ENCODE measurements at regions of chr4 and their contacts with region 1.

Region 1: DNA sequence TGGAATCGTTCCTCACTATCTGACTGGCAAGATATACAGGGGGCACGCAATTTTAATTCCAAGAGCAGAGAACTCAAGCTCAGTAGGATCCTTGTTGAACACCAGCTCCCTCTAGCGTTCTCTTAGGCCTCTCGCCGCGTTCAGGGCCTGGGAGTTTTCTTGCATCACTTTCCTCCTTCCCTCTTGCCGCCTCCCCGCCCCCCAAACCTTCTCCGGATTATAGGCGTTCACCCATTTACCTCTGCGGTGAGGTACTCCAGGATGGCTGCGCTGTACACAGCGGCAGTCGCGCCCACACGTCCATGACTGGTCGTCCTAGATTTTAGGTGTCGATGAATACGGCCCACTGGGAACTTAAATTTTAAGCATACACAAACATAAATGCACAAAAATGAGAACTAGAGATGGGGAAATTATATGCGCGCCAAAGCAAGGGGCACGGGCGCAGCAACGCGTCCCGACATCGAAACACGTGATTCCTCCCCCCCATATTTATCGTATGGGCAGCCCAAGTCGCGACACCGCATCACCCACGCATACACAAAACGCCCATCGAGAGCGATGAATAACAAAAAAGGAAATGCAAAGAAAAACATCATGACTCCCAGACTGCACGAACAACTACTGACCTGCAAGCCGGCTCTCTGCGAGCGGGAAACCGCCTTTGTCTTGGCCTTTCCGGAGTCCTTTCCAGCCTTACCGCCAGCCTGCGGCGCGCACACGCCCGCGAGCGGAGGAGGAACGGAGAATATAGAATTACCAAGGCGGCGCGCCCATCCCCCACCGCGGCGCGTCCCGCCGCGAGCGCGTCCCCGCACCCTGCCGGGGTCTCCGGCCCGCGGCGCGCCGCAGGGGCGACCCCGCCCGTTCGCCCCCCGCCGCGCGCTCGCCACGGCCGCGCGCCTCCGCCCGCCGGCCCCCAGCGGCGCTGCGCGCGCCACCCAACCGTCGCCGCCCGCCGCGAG is 759 bp downstream of the H2AZ1 start:
- DNase-seq: peak; percentile 63 to 90 (median 86)
- ATAC-seq: peak; percentile 49
- H3K4me3 ChIP-seq: peak overlapping the region; percentile 93
- H3K4me3 Mint-ChIP-seq: no peak overlapping the region
- H3K27ac ChIP-seq: peak overlapping the region; percentile 91
- H3K27ac Mint-ChIP-seq: no peak overlapping the region
- H3K4me1 ChIP-seq: peaks cover 34 to 37% of the 10 kb centered on the region in 2 donors
- H3K4me1 Mint-ChIP-seq: peaks cover 18 to 40% (median 31%) of the 10 kb centered on the region in 7 donors
- H3K27me3 ChIP-seq: no peaks in the 10 kb centered on the region
- H3K27me3 Mint-ChIP-seq: no peaks in the 10 kb centered on the region

Region 2: DNA sequence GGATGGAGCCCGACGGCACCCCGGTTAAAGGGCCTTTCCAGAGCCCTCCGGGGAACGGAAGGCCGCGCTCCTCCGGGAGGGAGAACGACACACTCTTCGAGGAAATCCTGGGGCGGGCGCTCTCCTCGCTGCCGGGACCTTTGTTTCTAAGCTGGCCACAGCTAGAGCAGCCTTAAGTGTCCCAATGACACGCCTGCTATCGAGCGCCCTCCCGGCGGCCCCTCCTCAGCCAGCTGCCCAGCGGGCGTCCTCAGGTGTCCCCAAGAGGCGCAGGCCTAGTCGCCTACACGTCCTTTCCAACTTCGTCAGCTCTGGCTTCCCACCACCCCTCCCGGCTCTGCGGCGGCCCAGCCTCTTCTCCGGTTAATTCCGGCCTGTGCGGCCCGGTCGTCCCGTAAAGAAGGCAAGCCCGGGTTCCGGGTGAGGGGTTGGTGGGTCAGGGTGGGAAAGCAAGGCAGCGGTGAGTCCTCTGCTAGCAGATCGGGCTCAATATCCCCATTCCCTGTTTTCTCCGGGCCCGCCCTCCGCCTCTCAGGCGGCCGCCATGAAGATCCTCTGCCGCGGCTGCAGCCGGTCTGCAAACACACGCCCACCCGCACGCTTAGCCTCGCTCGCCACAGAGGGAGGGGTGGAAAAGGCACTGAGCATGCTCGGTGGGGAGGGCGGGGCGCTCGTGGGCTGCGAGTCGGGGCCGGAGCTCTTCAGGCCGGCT is 1688.6 kb before region 1 on chr4:
- CTCF ChIA-PET with region 1: no interaction called
- POLR2A ChIA-PET with region 1: no interaction called
- intact Hi-C with region 1: loop called in 1 of 2 experiments (anchors 1 kb)
- DNase-seq: peak in 6 of 9 donors; percentile 69 to 95 (median 78)
- ATAC-seq: peak; percentile 85
- H3K4me3 ChIP-seq: peak overlapping the region; percentile 90
- H3K4me3 Mint-ChIP-seq: peak overlapping the region; percentile 92 to 98 (median 94)
- H3K27ac ChIP-seq: peak overlapping the region; percentile 86
- H3K27ac Mint-ChIP-seq: peak overlapping the region; percentile 84 to 97 (median 92)
- H3K4me1 ChIP-seq: peaks cover 5 to 12% of the 10 kb centered on the region in 2 donors
- H3K4me1 Mint-ChIP-seq: peaks cover 31 to 60% (median 54%) of the 10 kb centered on the region in 7 donors
- H3K27me3 ChIP-seq: no peaks in the 10 kb centered on the region
- H3K27me3 Mint-ChIP-seq: no peaks in the 10 kb centered on the region

Region 3: DNA sequence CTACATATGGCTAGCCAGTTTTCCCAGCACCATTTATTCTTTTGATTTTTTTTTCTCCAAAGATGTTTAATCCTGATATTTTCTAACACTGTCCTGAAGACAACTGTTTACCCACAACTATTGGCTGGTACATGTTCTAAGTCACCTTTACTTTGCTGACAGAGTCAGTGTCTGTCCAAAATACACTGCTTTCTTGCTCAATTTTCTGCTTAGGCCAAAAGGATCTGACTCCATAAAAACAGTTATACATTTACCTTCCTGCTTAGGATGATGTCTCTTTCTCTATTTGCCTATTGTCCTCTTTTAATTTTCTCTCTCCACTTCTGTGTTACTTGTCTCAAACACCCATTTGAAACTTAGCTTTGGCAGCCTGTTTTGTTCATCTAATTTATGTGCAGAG is 600.0 kb before region 1 on chr4:
- CTCF ChIA-PET with region 1: no interaction called
- POLR2A ChIA-PET with region 1: no interaction called
- intact Hi-C with region 1: no loop called
- DNase-seq: no peak
- ATAC-seq: no peak
- H3K4me3 ChIP-seq: no peak overlapping the region
- H3K4me3 Mint-ChIP-seq: no peak overlapping the region
- H3K27ac ChIP-seq: no peak overlapping the region
- H3K27ac Mint-ChIP-seq: no peak overlapping the region
- H3K4me1 ChIP-seq: no peaks in the 10 kb centered on the region
- H3K4me1 Mint-ChIP-seq: peaks cover 0 to 6% (median 0%) of the 10 kb centered on the region in 7 donors
- H3K27me3 ChIP-seq: no peaks in the 10 kb centered on the region
- H3K27me3 Mint-ChIP-seq: peaks cover 0 to 17% (median 7%) of the 10 kb centered on the region in 5 donors

Region 4: GRCh38 chr4:99504804-99505569 is 444.3 kb before region 1 on chr4:
- CTCF ChIA-PET with region 1: no interaction called
- POLR2A ChIA-PET with region 1: interaction called, 3 read pairs
- intact Hi-C with region 1: loop called (anchors 1 to 5 kb)
- DNase-seq: no peak
- ATAC-seq: no peak
- H3K4me3 ChIP-seq: no peak overlapping the region
- H3K4me3 Mint-ChIP-seq: peak overlapping the region in 3 of 10 donors; percentile 14 to 76 (median 56)
- H3K27ac ChIP-seq: no peak overlapping the region
- H3K27ac Mint-ChIP-seq: peak overlapping the region in 8 of 9 donors; percentile 14 to 91 (median 40)
- H3K4me1 ChIP-seq: peaks cover 8 to 33% of the 10 kb centered on the region in 2 donors
- H3K4me1 Mint-ChIP-seq: peaks cover 31 to 63% (median 57%) of the 10 kb centered on the region in 7 donors
- H3K27me3 ChIP-seq: no peaks in the 10 kb centered on the region
- H3K27me3 Mint-ChIP-seq: peaks cover 0 to 2% (median 0%) of the 10 kb centered on the region in 5 donors

Region 5: DNA sequence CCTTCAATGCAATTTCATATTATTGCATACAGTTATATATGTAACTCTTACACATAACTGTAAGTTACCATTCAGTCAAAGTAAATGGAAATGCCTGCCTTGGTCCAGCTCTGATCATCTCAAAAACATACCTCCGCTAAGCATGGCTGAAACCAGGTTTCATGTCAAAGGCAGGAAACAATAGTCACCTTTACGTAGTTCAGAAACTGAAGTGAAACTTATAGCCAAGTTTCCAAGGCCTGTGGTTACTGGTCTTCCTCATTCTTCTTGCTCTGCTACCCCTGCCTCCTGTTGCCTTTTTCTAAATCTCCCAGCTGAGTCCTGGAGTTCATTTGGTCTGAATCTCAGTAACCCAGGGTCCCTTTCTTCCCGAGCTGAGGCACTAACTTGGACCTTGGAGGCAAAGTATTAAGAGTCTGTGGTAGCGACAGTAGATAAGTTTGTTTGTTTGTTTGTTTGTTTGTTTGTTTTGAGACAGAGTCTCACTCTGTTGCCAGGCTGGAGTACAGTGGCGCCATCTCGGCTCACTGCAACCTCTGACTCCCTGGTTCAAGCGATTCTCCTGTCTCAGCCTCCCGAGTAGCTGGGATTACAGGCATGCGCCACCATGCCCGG is 101.8 kb before region 1 on chr4:
- CTCF ChIA-PET with region 1: interaction called, 4 read pairs
- POLR2A ChIA-PET with region 1: interaction called, 8 read pairs
- intact Hi-C with region 1: loop called in 1 of 2 experiments (anchors 2 kb)
- DNase-seq: peak in 6 of 9 donors; percentile 13 to 39 (median 26)
- ATAC-seq: peak; percentile 61
- H3K4me3 ChIP-seq: peak overlapping the region; percentile 9
- H3K4me3 Mint-ChIP-seq: peak overlapping the region in 9 of 10 donors; percentile 49 to 85 (median 75)
- H3K27ac ChIP-seq: peak overlapping the region; percentile 70
- H3K27ac Mint-ChIP-seq: peak overlapping the region; percentile 88 to 99 (median 96)
- H3K4me1 ChIP-seq: peaks cover 8 to 27% of the 10 kb centered on the region in 2 donors
- H3K4me1 Mint-ChIP-seq: peaks cover 31 to 75% (median 65%) of the 10 kb centered on the region in 7 donors
- H3K27me3 ChIP-seq: no peaks in the 10 kb centered on the region
- H3K27me3 Mint-ChIP-seq: no peaks in the 10 kb centered on the region

Region 6: GRCh38 chr4:99927566-99927965 is 21.8 kb before region 1 on chr4:
- CTCF ChIA-PET with region 1: interaction called, 4 read pairs
- POLR2A ChIA-PET with region 1: interaction called, 10 read pairs
- intact Hi-C with region 1: loop called (anchors 1 to 2 kb)
- DNase-seq: no peak
- ATAC-seq: no peak
- H3K4me3 ChIP-seq: no peak overlapping the region
- H3K4me3 Mint-ChIP-seq: no peak overlapping the region
- H3K27ac ChIP-seq: no peak overlapping the region
- H3K27ac Mint-ChIP-seq: peak overlapping the region in 1 of 9 donors; percentile 13
- H3K4me1 ChIP-seq: peaks cover 4 to 9% of the 10 kb centered on the region in 2 donors
- H3K4me1 Mint-ChIP-seq: peaks cover 23 to 68% (median 52%) of the 10 kb centered on the region in 7 donors
- H3K27me3 ChIP-seq: no peaks in the 10 kb centered on the region
- H3K27me3 Mint-ChIP-seq: no peaks in the 10 kb centered on the region

Region 7: DNA sequence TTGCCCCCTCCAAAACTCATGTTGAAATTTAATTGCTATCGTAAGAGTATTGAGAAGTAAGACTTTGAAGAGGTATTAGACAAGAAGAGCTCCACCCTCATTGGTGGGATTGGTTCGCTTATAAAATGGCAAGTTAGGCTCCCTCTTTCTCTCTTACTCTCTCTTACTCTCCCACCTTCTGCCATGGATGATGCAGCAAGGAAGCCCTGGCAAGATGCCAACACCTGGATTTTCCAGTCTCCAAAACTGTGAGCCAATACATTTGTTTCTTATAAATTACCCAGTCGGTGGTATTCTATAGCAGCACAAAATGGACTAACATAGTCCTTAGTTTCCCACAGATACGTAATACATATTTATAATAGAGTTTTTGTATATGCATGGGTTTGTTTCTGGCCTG is 121.6 kb after region 1 on chr4:
- CTCF ChIA-PET with region 1: no interaction called
- POLR2A ChIA-PET with region 1: no interaction called
- intact Hi-C with region 1: no loop called
- DNase-seq: no peak
- ATAC-seq: no peak
- H3K4me3 ChIP-seq: no peak overlapping the region
- H3K4me3 Mint-ChIP-seq: no peak overlapping the region
- H3K27ac ChIP-seq: no peak overlapping the region
- H3K27ac Mint-ChIP-seq: no peak overlapping the region
- H3K4me1 ChIP-seq: no peaks in the 10 kb centered on the region
- H3K4me1 Mint-ChIP-seq: no peaks in the 10 kb centered on the region
- H3K27me3 ChIP-seq: no peaks in the 10 kb centered on the region
- H3K27me3 Mint-ChIP-seq: peaks cover 8 to 36% (median 25%) of the 10 kb centered on the region in 5 donors

Region 8: GRCh38 chr4:101020956-101021355 is 1071.6 kb after region 1 on chr4:
- CTCF ChIA-PET with region 1: no interaction called
- POLR2A ChIA-PET with region 1: no interaction called
- intact Hi-C with region 1: loop called (anchors 5 to 10 kb)
- DNase-seq: peak in 3 of 9 donors; percentile 3 to 10 (median 10)
- ATAC-seq: peak; percentile 82
- H3K4me3 ChIP-seq: peak overlapping the region; percentile 21
- H3K4me3 Mint-ChIP-seq: peak overlapping the region in 4 of 10 donors; percentile 3 to 76 (median 46)
- H3K27ac ChIP-seq: no peak overlapping the region
- H3K27ac Mint-ChIP-seq: peak overlapping the region; percentile 8 to 90 (median 59)
- H3K4me1 ChIP-seq: peaks cover 0 to 48% of the 10 kb centered on the region in 2 donors
- H3K4me1 Mint-ChIP-seq: peaks cover 21 to 55% (median 34%) of the 10 kb centered on the region in 7 donors
- H3K27me3 ChIP-seq: no peaks in the 10 kb centered on the region
- H3K27me3 Mint-ChIP-seq: no peaks in the 10 kb centered on the region